Activated naive CD4-positive, alpha-beta T cell treated with anti-CD3 and anti-CD28 coated beads for 36 hours (primary cell): ENCODE measurements at regions of chr5 and their contacts with region 1.

Region 1: DNA sequence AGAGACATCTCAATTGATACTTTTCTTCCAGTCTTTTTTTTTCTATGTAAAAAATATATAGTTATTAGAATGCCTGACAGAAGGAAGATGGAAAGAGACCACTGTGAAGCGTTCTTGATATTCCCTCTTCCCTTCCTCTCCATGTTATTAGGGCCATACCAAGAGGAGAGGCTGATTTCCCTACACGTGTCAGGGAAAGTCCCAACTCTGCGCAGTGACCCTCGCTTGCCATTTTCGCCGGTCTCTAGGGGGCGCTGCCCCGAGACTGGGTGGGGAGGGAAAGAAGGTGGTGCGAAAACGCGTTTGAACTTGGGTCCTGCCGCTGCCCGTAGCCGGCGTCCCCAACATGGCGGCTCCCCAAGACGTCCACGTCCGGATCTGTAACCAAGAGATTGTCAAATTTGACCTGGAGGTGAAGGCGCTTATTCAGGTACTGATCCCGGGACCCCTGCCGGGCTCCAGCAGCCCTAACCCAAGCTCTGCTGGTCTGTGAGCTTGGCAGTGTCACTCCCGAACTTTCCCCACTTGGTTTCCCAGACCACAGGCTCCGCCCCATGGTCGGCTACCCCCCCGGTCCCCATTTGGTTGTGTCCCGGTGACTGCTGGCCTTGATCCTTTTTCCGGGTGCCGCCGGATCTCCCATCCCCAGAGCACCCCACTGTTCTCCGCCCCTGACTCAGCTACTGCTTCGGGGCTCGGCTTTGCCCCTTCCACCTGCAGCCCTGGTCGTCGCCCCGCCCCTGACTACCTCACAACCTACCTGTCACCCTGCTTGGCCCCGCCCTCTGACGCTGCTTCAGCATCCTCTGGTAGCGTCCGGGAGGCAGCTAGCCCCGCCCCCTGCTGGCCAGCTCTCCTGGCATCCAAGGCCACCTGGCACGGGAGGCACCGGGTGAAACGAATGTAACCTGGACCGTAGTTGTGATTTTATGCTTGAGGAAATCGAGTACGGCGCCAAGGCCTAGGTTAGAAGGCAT is at the start of gene BNIP1:
- DNase-seq: peak; percentile 99
- H3K4me3 Mint-ChIP-seq: peak within 1 kb of the TSS; percentile 97
- H3K27ac Mint-ChIP-seq: peak within 1 kb of the TSS; percentile 92
- H3K4me1 Mint-ChIP-seq: peaks cover 14% of the 10 kb centered on the region
- H3K27me3 Mint-ChIP-seq: no peaks in the 10 kb centered on the region
- total RNA-seq, gene BNIP1: 29.4 to 30.4 TPM

Region 2: DNA sequence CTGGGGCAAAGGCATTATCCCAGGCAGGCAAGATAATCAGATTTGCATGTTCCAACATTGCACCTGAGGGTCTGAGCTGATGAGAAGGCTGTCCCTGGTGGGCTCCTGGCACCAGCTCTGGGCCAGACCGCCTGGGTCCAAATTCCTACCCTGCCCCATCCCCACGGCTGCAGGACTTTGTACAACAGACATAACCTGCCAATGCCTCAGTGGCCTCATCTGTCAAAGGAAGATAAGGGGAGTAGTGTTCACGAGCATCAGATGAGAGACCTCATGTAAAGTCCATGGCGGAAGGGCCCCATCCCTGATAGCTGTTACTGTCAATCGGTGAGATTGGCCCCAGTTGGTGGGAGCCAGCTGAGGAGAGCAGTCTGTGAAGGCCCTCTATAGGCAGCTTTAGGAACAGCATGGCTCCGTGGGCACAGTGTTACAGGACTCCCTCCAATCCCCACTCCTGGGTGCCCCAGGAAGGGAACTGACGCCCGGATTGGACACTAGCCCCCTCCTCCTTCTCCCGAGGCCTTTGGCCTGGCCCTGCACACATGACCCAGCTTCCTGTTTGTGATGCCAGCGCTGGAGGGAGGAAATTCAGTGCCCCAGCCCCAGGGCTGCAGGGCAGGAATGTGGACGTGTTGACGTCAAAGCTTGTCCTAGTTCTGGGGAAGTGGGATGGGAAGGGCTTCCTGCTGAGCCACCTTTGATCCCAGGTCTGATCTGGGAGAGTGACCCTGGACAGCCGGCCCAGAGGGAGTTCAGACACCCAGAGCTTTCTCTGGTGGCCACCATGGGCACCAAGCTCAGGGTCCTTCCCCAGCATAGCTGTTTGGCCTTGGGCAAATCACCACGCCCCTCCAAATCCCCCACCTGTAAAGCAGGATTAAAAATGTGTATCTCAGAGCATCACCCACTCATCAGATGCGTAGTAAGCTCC is 429.7 kb before region 1 on chr5:
- CTCF ChIA-PET with region 1: no interaction called
- intact Hi-C with region 1: loop called (anchors 1 kb)
- DNase-seq: peak; percentile 75
- H3K4me3 Mint-ChIP-seq: no peak overlapping the region
- H3K27ac Mint-ChIP-seq: no peak overlapping the region
- H3K4me1 Mint-ChIP-seq: no peaks in the 10 kb centered on the region
- H3K27me3 Mint-ChIP-seq: peaks cover 5% of the 10 kb centered on the region

Region 3: GRCh38 chr5:172770675-172771438 is 373.6 kb before region 1 on chr5 and contains the start of gene DUSP1:
- CTCF ChIA-PET with region 1: no interaction called
- intact Hi-C with region 1: loop called (anchors 1 kb)
- DNase-seq: peak; percentile 96
- H3K4me3 Mint-ChIP-seq: peak within 1 kb of the TSS; percentile 90
- H3K27ac Mint-ChIP-seq: peak within 1 kb of the TSS; percentile 93
- H3K4me1 Mint-ChIP-seq: peaks cover 66% of the 10 kb centered on the region
- H3K27me3 Mint-ChIP-seq: no peaks in the 10 kb centered on the region
- total RNA-seq, gene DUSP1: 7.0 to 7.3 TPM

Region 4: DNA sequence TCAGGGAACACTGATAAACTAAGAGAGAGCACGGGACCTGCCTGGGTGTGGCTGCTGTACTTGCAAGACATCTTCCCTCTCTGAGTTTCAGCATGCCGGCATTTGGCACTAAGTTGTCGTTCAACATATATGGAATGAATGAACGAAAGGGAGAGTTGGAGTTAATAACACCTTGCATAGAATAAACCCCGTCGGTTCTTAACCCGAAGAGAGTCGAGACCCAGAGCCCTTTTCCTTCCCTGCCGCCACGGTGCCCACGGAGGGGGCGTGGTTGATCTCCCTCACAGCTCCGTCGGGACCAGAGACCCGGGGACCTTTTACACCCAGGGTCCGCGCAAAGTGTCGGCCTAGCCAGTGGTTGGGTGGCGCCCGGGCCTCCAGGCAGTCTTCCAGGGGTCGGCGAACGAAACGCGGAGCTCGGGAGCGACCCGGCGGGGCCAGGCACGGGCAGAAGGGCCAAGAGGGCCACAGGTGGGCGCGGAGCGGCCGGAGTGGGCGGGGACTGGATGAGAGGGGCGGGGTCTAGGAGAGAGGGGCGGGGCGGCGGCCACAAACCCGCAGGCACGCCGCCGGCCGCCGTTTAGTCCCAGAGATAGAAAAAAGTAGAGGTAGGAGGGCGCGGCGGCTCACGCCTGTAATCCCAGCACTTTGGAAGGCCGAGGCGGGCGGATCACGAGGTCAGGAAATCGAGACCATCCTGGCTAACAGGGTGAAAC is 186.0 kb before region 1 on chr5:
- CTCF ChIA-PET with region 1: no interaction called
- intact Hi-C with region 1: loop called (anchors 1 kb)
- DNase-seq: peak; percentile 60
- H3K4me3 Mint-ChIP-seq: peak overlapping the region; percentile 93
- H3K27ac Mint-ChIP-seq: peak overlapping the region; percentile 86
- H3K4me1 Mint-ChIP-seq: peaks cover 16% of the 10 kb centered on the region
- H3K27me3 Mint-ChIP-seq: no peaks in the 10 kb centered on the region

Region 5: DNA sequence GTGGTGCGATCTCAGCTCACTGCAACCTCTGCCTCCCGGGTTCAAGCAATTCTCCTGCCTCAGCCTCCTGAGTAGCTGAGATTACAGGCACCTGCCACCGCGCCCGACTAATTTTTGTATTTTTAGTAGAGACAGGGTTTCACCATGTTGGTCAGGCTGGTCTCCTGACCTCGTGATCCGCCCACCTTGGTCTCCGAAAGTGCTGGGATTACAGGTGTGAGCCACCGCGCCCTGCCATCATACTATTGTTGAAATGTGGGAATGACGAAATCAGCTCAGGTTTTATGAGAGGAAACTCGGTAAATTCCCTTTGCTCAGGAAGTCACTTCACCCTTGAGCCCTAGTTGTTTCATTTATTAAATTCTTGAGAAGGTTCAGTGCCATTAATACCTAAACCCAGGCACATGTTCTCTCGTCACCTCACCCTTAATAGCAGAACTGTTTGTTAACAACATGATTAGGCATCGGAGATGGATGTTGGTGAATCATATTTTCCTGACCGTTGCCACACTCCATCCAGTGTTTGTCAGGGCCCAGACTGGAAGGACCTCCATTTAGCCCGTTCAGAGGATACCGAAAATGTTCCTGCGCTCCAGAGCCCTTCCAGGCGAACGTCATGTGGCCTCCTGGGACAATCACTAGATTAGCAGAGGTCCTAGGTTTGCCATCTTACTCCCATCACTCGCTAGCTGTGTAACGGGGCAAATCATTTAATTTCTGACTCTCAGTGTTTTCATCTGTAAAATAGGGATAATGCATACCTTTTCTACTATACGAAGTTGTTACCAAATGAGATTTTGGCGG is 108.4 kb before region 1 on chr5:
- CTCF ChIA-PET with region 1: interaction called, 5 read pairs
- intact Hi-C with region 1: loop called (anchors 1 kb)
- DNase-seq: peak; percentile 72
- H3K4me3 Mint-ChIP-seq: peak overlapping the region; percentile 74
- H3K27ac Mint-ChIP-seq: peak overlapping the region; percentile 97
- H3K4me1 Mint-ChIP-seq: peaks cover 63% of the 10 kb centered on the region
- H3K27me3 Mint-ChIP-seq: no peaks in the 10 kb centered on the region

Region 6: DNA sequence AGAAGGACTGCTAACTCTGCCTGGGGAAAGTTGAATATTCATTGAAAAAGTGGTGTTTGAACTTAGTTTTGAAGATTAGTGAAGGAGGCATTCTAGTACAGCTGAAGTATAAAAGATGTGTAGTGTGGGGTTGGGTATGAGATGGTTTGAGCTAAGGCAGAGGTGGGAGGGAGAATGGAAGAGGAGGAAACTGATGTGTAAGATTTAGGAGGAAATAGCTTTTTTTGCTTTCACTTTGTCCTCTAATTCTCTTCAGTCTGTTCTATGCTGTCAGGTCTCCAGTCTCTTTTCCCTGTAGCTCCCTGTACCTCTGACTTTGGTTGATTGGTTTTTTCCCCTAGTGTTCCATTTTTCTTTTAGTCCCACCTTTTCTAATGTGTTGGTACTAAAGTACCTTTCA is 79.3 kb before region 1 on chr5:
- CTCF ChIA-PET with region 1: interaction called, 3 read pairs
- intact Hi-C with region 1: loop called (anchors 2 kb)
- DNase-seq: no peak
- H3K4me3 Mint-ChIP-seq: peak overlapping the region; percentile 66
- H3K27ac Mint-ChIP-seq: peak overlapping the region; percentile 85
- H3K4me1 Mint-ChIP-seq: peaks cover 83% of the 10 kb centered on the region
- H3K27me3 Mint-ChIP-seq: no peaks in the 10 kb centered on the region

Region 7: DNA sequence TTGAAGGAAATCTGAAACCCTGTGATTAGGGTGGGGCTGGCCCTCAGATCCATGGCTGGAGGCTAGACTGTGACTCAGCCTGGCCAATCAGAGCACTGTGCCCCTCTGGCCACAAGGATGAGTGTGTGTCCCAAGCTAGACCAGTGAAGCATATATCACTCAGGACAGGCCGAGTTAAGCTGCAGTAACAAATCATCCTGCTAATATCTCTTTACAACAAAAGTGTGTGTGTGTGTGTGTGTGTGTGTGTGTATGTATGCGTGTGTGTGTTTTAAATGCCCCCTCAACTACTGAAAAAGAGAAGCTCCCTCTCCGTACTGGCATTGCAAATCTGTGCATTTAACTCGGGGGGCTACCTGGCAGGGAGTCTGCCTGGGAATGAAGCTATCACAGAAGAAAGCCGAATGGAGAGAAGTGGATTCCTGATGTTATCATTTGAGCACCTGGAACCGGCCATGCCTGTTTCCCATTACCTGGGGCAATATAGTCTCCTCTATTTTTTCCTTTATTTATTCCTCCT is 158.1 kb after region 1 on chr5:
- CTCF ChIA-PET with region 1: no interaction called
- intact Hi-C with region 1: no loop called
- DNase-seq: no peak
- H3K4me3 Mint-ChIP-seq: no peak overlapping the region
- H3K27ac Mint-ChIP-seq: no peak overlapping the region
- H3K4me1 Mint-ChIP-seq: no peaks in the 10 kb centered on the region
- H3K27me3 Mint-ChIP-seq: peaks cover 14% of the 10 kb centered on the region

Region 8: GRCh38 chr5:173887610-173888472 is 743.4 kb after region 1 on chr5 and contains the start of gene CPEB4:
- CTCF ChIA-PET with region 1: no interaction called
- intact Hi-C with region 1: loop called (anchors 2 kb)
- DNase-seq: peak; percentile 98
- H3K4me3 Mint-ChIP-seq: peak within 1 kb of the TSS; percentile 98
- H3K27ac Mint-ChIP-seq: peak within 1 kb of the TSS; percentile 96
- H3K4me1 Mint-ChIP-seq: peaks cover 66% of the 10 kb centered on the region
- H3K27me3 Mint-ChIP-seq: no peaks in the 10 kb centered on the region
- total RNA-seq, gene CPEB4: 7.6 to 7.8 TPM